ENCODE measurements at regions of chr19 and their contacts with region 1.

Region 1: DNA sequence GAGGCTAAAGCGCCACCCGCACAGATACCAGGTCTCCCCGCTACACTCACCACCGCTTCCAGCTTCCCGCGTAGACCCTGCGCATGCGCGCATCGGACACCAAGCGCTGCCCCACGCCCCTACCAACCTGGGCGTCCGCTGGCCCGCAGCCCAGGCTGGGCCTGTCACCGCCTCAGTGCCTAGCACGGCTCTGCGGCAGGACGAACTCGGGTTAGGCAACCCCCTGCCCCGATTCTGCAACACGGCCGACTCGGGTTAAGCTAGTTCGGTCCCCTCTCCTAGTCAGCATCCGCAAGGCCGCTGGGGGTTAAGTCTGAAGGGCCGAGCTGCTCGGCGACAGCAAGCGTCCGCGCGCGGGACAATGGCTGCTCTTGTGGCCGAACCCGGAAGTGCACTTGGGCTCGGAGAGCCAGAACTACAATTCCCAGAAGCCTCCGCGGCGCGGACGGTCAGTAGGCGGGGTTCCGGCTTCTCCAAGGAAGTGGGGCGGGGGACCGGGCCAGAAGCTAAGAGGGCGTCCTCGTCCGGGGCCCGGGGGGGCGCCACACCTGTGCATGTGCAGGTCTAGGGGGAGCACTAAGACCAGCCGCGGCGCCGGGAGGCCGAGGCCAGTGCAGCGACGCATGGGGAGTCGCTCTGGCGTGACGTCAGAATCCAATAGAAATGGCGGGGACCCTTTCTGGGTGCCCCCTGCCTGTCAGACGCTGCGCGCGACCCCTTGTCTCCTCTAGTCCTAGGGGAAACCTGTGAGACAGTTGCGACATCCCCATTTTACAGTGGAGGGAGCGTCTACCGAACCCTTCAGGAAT is at the start of gene ZNF180:
- DNase-seq: peak; percentile 94 to 96 (median 96)
- ATAC-seq: peak; percentile 95
- H3K4me3 ChIP-seq: peak within 1 kb of the TSS; percentile 61 to 83
- H3K27ac ChIP-seq: peak within 1 kb of the TSS; percentile 74 to 91 (median 82)
- H3K4me1 ChIP-seq: peaks cover 23% of the 10 kb centered on the region
- H3K27me3 ChIP-seq: peaks cover 0 to 3% of the 10 kb centered on the region in 2 donors
- CTCF ChIP-seq: peak in 5 of 7 experiments; percentile 37 to 54 (median 48)
- POLR2A ChIP-seq: peak; percentile 66 to 90 (median 87)
- total RNA-seq, gene ZNF180: 2.6 to 12.2 TPM

Region 2: DNA sequence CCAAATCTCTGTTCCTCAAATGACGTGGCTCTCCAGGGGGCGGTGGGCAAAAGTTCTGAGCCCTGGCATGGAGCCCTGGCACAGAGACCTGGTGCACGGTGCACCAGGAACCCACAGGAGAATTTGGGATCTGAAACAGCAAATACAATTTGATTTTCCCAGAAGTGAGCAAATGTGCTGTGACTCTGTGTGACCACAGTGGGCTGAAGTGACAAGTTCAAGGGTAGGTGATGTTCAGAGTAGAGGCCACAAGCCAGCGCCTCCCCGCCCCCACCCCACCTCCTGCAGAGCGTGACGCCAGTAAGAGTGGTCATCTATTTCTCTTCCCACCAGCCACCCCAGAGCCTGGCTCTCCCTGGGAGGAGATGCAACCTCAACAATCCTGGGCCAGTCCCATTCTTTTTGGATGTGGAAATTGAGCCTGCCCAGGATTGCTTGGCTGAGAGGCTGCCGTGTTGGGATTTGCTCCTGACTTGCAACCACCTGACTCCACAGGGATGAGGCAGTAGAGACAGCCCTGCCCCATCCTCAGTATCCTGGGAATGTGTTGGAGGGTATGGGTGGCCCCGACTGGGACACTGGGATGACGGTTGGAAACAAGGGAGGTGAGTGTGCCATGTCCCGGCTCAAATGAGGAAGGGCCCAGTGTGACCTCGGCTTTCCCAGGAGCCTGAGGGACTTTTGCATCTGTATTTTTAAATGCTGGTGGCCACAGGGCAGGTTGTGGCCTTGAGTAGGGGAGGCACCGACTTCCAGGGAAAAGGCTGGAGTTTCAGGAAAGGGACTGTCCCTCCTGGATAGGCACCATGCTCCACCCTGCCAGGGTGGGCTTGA is 237.1 kb after region 1 on chr19:
- intact Hi-C with region 1: loop called (anchors 5 kb)
- DNase-seq: peak; percentile 43 to 69 (median 54)
- ATAC-seq: peak; percentile 13
- H3K4me3 ChIP-seq: no peak overlapping the region
- H3K27ac ChIP-seq: peak overlapping the region; percentile 69 to 98 (median 82)
- H3K4me1 ChIP-seq: peaks cover 50% of the 10 kb centered on the region
- H3K27me3 ChIP-seq: no peaks in the 10 kb centered on the region
- CTCF ChIP-seq: no peak
- POLR2A ChIP-seq: peak in 2 of 3 donors; percentile 83 to 84

Measured in body of pancreas (tissue), 4 donors.